Heart left ventricle (tissue), 16 donors: ENCODE measurements at regions of chr14 and their contacts with region 1.

Region 1: GRCh38 chr14:80941241-80942182 is at the start of gene CEP128:
- DNase-seq: peak; percentile 95 to 96 (median 96)
- ATAC-seq: peak; percentile 99 to 100 (median 100)
- H3K4me3 ChIP-seq: peak within 1 kb of the TSS; percentile 38 to 84 (median 70)
- H3K27ac ChIP-seq: peak within 1 kb of the TSS in 10 of 12 donors; percentile 16 to 71 (median 52)
- H3K4me1 ChIP-seq: peaks cover 0 to 18% (median 8%) of the 10 kb centered on the region in 12 donors
- H3K27me3 ChIP-seq: peaks cover 0 to 3% (median 0%) of the 10 kb centered on the region in 9 donors
- CTCF ChIP-seq: no peak
- POLR2A ChIP-seq: no peak
- total RNA-seq, gene CEP128: 0.94 to 6.6 (median 3.5) TPM

Region 2: DNA sequence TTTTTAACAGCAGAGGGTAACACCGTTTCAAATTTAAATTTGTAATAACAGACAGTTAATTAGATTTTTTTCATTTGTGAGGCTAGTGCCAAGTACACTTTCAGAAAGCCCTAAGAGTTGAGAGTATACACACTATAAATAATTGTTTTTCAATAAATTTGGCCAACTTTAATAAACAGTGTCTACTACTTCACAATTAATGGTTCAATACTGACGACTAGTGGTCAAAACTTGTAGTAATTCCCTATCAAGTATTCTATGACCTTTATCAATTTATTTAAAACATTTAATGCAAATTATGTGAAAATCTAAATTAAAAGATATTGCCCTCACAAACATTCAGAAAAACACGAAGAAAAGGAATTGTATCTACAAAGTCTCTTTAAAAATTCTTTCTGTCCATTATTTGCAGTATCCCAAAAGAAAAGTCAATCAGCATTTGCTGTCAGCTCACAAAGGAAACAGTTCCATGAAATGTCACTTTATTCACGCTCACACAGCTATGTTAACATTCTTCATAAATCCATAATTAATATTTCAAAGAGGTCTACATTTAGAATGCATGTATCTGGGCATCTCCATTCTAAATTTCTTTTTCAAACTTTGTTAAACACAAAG is 91.2 kb before region 1 on chr14:
- intact Hi-C with region 1: no loop called
- DNase-seq: no peak
- ATAC-seq: no peak
- H3K4me3 ChIP-seq: no peak overlapping the region
- H3K27ac ChIP-seq: no peak overlapping the region
- H3K4me1 ChIP-seq: peaks cover 0 to 5% (median 0%) of the 10 kb centered on the region in 12 donors
- H3K27me3 ChIP-seq: no peaks in the 10 kb centered on the region
- CTCF ChIP-seq: peak; percentile 42 to 71 (median 58)
- POLR2A ChIP-seq: no peak

Region 3: DNA sequence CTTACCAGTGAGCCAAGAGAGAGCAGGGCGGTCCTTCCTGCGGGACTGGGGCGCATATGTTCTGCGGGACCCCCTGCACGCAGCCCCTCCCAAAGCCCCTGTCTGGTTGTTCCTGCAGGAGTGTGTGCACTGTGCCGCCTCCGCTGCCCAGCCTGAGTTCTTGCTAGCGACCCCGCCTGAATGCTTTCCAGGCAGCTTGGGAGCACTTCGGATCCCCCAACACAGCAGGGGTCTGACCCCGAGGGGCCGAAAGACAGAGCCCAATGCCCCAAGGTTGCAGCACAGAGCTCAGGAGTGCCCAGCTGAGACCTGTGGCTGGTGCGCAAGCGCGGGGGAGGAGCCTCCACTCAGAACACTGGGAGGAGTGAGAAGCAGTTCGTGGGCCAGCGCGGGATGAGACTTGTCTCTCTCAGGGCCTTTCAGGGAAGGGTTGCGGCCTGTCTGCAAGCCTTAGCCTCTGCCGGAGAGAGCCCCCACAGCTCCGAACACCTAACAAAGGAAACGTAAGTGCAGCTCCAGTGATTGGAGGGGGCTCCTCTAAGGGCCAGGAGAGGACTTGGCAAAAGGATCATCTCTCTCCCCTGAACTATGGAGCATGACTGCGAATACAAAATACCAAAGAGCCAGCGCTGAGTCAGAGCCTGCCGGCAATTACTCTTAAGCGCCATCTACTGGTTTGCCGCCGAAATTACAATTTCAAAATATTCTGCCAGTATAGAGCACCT is 228.8 kb after region 1 on chr14:
- intact Hi-C with region 1: loop called in 2 of 10 experiments (anchors 5 to 10 kb)
- DNase-seq: peak; percentile 92 to 97 (median 96)
- ATAC-seq: peak; percentile 99 to 100 (median 100)
- H3K4me3 ChIP-seq: peak overlapping the region; percentile 57 to 87 (median 72)
- H3K27ac ChIP-seq: peak overlapping the region; percentile 82 to 97 (median 93)
- H3K4me1 ChIP-seq: peaks cover 0 to 19% (median 8%) of the 10 kb centered on the region in 12 donors
- H3K27me3 ChIP-seq: no peaks in the 10 kb centered on the region
- CTCF ChIP-seq: peak; percentile 82 to 95 (median 90)
- POLR2A ChIP-seq: peak in 1 of 2 donors; percentile 68

Region 4: DNA sequence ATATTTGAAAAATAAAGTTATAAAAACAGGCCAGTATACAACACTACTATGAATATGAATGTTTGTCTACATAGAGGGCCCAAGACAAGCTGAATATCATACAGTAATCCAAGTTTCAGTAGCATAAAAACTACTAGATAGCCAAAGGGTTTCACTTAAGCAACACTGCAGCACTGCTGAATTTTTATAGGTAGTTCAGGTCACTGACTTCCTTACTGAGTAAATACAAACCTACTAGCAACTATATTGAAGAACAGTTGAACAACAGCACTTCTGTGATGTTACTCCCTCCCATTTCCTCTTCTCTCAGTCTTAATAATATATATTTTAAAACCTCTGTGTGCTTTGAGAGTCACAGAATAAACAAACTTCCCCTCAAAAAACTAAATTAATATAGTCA is 236.6 kb after region 1 on chr14:
- intact Hi-C with region 1: loop called in 2 of 10 experiments (anchors 5 to 10 kb)
- DNase-seq: no peak
- ATAC-seq: no peak
- H3K4me3 ChIP-seq: peak overlapping the region in 2 of 12 donors; percentile 27 to 39
- H3K27ac ChIP-seq: peak overlapping the region in 3 of 12 donors; percentile 2 to 77 (median 33)
- H3K4me1 ChIP-seq: peaks cover 0 to 48% (median 5%) of the 10 kb centered on the region in 12 donors
- H3K27me3 ChIP-seq: no peaks in the 10 kb centered on the region
- CTCF ChIP-seq: no peak
- POLR2A ChIP-seq: no peak

Region 5: GRCh38 chr14:81464247-81465002 is 522.9 kb after region 1 on chr14:
- intact Hi-C with region 1: loop called in 1 of 10 experiments (anchors 10 kb)
- DNase-seq: peak in 2 of 5 donors; percentile 35 to 53
- ATAC-seq: peak in 3 of 4 donors; percentile 38 to 58 (median 53)
- H3K4me3 ChIP-seq: peak overlapping the region in 11 of 12 donors; percentile 32 to 64 (median 49)
- H3K27ac ChIP-seq: peak overlapping the region in 5 of 12 donors; percentile 13 to 76 (median 23)
- H3K4me1 ChIP-seq: peaks cover 0 to 7% (median 0%) of the 10 kb centered on the region in 12 donors
- H3K27me3 ChIP-seq: no peaks in the 10 kb centered on the region
- CTCF ChIP-seq: peak; percentile 84 to 94 (median 92)
- POLR2A ChIP-seq: no peak